Posterior vena cava (tissue), 2 donors: ENCODE measurements at regions of chr19 and their contacts with region 1.

Region 1: DNA sequence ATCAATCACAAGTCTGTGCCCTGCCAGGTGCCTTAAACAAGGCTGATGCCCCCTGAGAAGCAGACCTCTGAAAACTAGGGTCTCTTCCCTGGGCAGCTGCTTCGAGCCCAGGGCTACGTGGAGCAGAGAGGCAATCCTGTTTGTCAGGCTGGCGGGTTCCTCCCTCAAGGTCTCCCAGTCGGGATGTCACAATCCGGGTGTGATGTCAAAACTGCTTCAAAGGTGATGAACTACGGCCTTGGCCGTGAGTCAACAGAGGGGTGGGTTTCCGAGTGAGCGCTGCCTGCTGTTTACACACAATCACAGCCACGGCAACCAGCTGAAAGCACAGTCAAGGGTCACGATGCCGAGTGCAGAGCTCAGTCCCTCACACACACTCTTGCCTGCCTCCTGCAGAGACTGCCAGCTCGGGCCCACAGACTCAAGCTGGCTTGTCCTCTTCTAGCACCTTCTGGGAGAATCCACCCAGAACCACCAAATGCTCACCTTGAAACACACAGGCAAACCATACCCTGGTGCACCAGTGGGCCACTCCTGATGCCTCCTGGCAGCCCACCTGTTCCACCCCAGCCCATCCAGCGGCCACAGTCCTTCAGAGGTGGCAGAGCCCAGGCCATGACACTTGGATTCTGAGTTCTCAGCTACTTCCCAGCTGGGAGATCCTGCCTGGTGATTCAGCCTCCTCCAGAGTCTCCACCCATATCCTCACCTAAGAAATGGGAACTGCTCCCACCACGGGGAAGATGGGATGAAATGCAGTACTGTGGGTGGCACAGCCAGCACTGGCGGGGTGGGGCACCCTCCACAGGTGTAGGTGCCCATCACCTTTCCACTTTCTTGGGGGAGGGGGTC is 6.8 kb downstream of the ELL start:
- DNase-seq: peak; percentile 90

Region 2: DNA sequence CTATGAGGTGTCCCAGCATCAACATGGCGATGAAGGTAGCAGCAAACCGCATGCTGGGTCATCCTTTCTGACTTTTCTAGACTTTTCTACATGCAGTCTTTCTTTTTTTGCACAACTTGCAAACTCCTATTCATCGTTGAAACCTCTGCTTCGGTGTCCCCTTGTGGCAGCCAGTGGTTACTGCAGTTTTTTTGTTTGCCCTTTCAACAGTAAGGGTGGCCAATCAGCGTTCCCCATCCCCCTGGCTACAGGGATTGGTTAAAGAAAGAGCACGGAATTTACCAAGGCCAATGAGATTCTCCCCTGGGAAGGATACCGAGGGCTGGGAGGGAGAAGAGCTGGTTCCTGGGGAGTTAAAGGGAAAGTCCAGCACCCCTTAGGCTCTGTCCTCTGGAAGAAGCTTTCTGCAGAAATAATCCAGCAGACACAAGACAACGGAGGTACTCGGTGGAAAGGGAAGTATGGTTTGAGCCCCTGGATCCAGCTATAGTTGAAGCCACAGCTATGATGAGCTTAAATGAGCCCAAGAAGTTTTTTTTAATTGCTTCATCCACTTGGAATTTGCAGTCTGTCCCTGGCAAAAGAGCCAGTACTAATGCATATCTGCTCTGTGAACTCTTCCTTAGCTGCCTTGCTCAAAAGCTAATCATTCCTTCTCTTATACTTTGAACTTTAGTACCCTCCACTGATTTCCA is 186.5 kb before region 1 on chr19:
- intact Hi-C with region 1: no loop called
- DNase-seq: peak; percentile 95

Region 3: GRCh38 chr19:18478569-18479311 is 36.3 kb before region 1 on chr19:
- intact Hi-C with region 1: no loop called
- DNase-seq: peak; percentile 95

Region 4: DNA sequence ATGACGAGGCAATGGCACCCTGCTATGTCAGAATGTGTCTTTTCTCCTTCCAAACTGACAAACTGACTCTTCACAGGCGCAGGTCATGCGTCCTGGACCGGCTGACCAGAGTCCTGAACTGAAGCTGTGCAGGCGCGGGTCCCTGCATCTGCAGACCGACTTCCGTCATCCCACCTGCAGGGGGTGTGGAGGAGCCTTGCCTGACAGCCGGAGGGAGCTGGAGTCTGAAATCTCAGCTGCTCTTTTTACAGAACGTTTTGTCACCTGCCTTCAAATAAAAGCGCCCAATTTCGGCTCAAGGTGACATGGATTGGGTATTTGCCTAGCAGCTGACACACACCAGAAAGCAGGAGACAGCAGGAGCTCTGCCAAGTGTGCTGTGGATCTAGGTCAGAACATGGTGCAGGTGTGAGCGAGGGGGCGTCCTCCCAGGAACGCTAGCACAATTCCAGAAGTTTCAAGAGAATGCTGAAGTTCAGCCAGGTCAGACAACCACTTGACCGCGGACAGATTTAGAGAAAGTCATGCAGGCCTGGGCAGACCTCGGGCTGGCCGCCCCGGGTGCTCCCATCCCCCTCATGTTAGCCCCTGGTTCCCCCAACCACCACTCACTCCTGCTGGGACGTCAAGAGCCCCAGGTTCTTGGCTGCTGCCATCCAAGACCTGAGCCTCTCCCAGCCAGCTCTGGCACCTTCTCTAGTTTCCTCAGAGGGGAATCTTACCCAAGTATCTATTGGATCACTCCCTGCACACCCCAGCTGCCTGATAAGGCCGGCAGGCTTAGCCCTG is 26.0 kb before region 1 on chr19:
- intact Hi-C with region 1: no loop called
- DNase-seq: no peak

Region 5: DNA sequence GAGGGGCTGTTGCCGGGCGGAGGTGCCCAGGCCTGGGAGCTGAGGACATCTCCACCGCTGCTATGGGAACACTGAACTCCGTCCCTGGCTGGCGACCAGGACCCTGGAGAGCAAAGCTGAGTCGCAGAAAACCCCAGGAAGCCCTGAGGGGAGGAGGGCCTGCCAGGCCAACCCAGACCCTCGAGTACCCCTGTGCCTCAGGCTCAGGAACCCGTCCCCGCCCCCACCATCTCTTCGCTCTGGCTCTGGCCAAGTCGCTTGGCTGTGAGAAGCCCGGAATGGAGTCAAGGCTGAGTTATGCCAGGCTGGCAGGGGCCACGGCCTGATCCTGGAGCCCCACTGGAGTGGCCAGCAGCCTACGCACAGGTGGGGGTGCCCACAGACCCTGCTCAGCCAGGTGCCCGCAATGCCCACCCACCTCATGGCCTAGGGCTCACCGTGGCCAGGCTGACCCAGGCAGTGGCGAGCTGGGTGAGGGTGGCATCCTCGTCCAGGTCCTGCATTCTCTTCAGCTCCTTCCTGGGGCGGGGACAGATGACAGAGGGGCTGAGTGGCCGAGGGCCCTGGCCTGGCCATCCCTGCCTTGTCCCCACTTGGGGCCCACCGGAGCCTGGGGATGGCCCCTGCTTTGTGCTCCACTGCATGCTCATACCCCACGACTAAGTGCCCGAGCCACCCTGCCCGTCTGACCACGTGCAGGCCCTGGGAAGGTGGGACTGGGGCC is 389.5 kb after region 1 on chr19:
- intact Hi-C with region 1: loop called in 1 of 2 experiments (anchors 5 kb)
- DNase-seq: no peak